HEK293 (cell line): ENCODE measurements at regions of chrX and their contacts with region 1.

Region 1: DNA sequence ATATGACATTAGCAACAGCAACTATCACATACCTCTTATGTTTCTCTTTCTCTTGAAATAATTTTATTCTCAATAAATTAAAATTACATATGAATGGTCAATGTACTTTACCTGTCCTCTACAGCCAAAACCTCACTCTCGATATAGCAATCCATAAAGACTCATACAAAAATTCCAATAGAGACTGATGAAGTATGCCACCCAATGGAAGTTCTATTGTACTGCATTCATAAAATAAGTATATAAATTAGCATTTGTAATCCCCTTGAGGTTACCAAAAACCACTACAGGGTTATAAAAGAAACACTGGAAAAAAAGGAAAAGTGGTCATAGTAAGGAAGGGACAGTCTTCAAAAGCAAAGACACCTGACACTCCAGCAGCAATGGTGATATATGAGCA is 32.8 kb downstream of the CLDN2 start:
- H3K4me3 ChIP-seq: no peak overlapping the region
- H3K27ac ChIP-seq: no peak overlapping the region
- H3K4me1 ChIP-seq: no peaks in the 10 kb centered on the region
- CTCF ChIP-seq: no peak

Region 2: DNA sequence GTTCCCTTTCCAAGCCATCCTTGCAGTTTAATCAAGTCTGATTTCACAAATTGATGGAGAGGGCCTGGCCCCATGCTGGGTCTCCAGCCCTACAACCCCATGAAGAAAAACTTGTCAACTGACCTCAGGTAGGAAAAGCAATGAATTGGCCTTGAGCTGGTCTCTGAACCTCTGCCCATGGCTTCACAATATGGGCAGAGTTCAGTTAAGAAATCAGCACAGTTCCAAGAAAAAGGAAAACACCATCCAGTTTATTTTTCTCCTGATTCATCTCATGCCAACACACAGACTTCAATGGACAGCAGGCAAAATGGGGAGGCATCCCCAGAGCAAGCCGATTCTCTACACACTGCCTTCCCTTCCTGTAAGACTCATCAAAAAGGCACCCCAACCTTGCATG is 53.1 kb before region 1 on chrX:
- CTCF ChIA-PET with region 1: interaction called, 16 read pairs
- POLR2A ChIA-PET with region 1: no interaction called
- H3K4me3 ChIP-seq: no peak overlapping the region
- H3K27ac ChIP-seq: no peak overlapping the region
- H3K4me1 ChIP-seq: no peaks in the 10 kb centered on the region; the same call in 1 of the 2 replicates
- CTCF ChIP-seq: no peak